Activated CD4-positive, alpha-beta T cell treated with anti-CD3 and anti-CD28 coated beads, Interleukin-2, amount 10 ng/mL, durations not matched to agents 7 days and 5 days (primary cell): ENCODE measurements at regions of chr1 and their contacts with region 1.

Region 1: DNA sequence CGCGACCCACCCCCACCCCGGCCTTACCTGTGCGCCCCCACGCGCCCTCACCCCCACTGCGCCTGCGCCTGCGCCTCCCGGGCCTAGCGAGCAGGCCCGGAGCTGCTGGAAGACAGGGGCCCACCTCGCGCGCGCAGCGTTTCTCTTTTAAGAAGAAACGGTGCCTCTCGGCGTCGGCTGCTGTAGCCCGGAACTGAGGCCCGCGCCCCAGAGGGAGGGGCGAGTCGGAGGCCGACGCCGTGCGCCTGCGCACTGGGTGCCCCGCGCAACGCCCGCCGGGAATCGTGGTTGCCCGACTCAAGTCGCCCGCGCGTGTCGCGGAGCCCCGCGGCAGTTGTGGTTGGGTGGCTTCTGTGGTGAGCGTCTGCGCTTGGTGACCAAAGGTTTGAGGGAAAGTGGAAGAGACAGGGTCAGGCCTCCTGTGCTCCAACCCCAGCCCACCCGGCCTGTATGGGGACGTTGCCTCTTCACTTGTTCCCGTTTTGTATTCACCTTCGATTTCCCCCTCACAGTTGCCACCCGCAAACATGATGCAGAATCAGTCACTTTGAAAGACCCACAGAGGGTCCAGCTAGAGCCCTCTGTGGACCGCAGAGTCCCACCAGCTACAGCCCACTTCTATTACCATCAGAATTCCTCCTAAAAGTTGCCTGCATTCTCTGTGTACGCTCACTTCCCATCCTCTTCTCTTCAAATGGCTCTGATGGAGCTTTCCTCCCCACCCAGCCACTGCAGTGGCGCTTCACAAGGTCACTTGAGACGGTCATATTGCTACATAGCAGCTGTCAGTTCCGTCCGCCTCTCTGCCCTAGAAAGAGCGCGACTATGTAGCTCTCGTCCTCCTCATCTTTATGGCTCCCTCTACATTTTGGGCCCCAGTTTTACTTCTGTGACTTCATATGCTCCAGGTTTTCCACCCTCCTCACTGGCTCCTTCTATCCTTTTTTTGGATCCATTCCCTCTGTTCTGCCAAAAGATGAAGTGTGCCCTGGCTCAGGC is at the start of gene ZNF692:
- DNase-seq: peak; percentile 97
- H3K4me3 Mint-ChIP-seq: peak within 1 kb of the TSS; percentile 93
- H3K27ac Mint-ChIP-seq: peak within 1 kb of the TSS; percentile 99
- H3K4me1 Mint-ChIP-seq: peaks cover 67% of the 10 kb centered on the region
- H3K27me3 Mint-ChIP-seq: peaks cover 3% of the 10 kb centered on the region
- total RNA-seq, gene ZNF692: 55.5 to 57.6 TPM

Region 2: DNA sequence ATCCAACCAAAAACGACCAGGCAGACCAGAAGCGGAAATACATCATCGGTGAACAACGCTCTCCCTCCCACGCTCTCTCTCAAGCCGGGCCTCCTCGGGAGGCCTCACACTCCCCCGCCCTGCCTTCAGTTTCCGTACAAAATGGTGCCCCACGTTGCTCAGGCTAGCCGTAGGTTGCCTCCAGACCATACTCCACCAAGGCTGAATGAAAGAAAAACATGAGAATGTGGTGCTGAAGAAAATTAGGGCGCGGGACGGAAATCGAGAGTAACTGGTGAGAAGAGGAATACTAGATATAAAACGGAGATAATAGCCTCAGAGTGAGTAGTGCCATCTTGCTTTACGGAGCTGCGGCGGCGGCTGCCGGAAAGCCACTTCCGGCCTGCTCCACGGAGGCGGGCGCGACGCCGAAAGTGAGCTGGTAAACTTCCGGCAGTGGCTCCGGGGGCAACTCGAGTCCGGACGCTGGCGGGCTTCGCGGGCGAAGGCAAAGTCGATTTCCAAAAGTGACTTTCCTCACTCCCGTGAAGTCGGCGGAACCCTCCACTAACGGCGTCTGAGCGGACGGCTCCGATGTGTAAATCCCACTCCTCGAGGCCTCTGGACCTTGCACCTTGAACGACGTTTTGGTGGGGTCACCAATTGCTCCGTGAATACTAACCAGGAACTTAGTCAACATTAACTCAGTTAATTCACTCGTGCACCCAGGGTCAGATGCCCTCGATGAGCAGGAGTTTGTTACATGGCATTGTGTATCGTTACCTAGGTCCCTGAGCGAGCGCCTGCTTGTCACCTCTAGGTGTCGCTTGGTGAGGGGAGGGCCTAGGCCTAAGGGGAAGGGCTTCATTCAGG is 33.1 kb before region 1 on chr1 and contains the start of gene SH3BP5L:
- CTCF ChIA-PET with region 1: interaction called, 11 read pairs
- POLR2A ChIA-PET with region 1: no interaction called
- DNase-seq: peak; percentile 94
- H3K4me3 Mint-ChIP-seq: peak within 1 kb of the TSS; percentile 90
- H3K27ac Mint-ChIP-seq: peak within 1 kb of the TSS; percentile 98
- H3K4me1 Mint-ChIP-seq: peaks cover 48% of the 10 kb centered on the region
- H3K27me3 Mint-ChIP-seq: peaks cover 2% of the 10 kb centered on the region
- total RNA-seq, gene SH3BP5L: 29.7 to 32.7 TPM

Region 3: GRCh38 chr1:248837794-248838356 is 21.3 kb before region 1 on chr1 and contains the start of gene ZNF672:
- CTCF ChIA-PET with region 1: interaction called, 16 read pairs
- POLR2A ChIA-PET with region 1: interaction called, 4 read pairs
- DNase-seq: peak; percentile 96
- H3K4me3 Mint-ChIP-seq: no peak within 1 kb of the TSS
- H3K27ac Mint-ChIP-seq: peak within 1 kb of the TSS; percentile 97
- H3K4me1 Mint-ChIP-seq: peaks cover 24% of the 10 kb centered on the region
- H3K27me3 Mint-ChIP-seq: peaks cover 2% of the 10 kb centered on the region
- total RNA-seq, gene ZNF672: 46.5 to 56.9 TPM

Region 4: GRCh38 chr1:248873409-248873992 is 14.3 kb after region 1 on chr1:
- CTCF ChIA-PET with region 1: interaction called, 11 read pairs
- POLR2A ChIA-PET with region 1: no interaction called
- DNase-seq: peak; percentile 86
- H3K4me3 Mint-ChIP-seq: peak overlapping the region; percentile 89
- H3K27ac Mint-ChIP-seq: peak overlapping the region; percentile 92
- H3K4me1 Mint-ChIP-seq: peaks cover 24% of the 10 kb centered on the region
- H3K27me3 Mint-ChIP-seq: peaks cover 18% of the 10 kb centered on the region